ENCODE measurements at regions of chr21 and their contacts with region 1.

Region 1: GRCh38 chr21:25903602-25904001 is 168.8 kb downstream of the GABPA start:
- DNase-seq: peak in 2 of 42 donors; percentile 25 to 35

Region 2: DNA sequence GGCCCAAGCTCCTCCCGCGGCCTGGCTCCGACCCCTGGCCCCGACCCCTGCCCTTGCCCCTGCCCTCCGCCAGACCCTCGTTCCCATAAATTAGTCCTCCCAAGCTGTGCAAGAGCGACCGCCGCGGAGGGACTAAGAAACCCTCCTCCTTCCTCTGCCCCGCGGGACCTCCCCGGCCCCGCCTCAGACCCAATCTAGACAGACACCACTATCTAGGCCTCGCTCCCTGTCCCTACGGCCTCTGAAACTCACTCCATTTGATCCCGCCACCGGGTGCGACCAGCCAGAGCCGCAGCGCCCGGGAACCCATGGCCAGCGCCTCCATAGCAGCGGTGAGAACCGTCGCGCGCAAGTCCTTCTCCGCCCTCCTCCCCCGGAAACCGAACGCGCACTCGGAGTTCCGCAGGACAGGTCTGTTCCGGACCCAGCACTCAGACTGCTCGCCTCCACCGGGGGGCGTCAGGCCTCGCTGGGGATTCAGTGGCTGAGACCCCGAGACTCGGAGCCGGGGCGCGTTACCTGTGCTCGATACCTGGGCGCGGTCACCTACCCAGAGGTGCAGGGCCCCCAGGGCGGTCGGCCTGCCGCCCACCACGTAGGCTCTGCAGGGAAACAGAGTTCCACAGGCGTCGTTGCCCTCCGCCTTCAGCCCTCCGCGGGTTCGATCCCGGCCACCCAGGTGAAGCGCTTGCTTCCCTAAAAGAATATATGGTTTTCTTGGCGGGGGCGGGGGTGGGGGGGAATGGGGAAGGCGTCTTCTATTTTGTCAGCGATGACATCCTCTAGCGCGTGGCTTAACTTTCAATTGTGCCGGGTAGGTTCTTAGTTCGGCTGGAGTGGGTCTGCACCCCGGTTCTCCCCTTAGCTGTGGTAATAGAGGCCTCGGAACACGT is 296.2 kb before region 1 on chr21 and contains the start of gene MRPL39:
- intact Hi-C with region 1: no loop called
- DNase-seq: peak; percentile 78 to 96 (median 89)

Region 3: GRCh38 chr21:25967573-25968438 is 64.2 kb after region 1 on chr21:
- intact Hi-C with region 1: loop called (anchors 10 kb)
- DNase-seq: no peak

Measured in head of caudate nucleus (tissue), 42 donors.